Caco-2 (cell line): ENCODE measurements at regions of chr14 and their contacts with region 1.

Region 1: GRCh38 chr14:94136575-94137331 is 7.3 kb upstream of the IFI27L2 start:
- DNase-seq: peak; percentile 71 to 79
- H3K4me3 ChIP-seq: no peak overlapping the region
- H3K4me3 Mint-ChIP-seq: no peak overlapping the region
- H3K27ac Mint-ChIP-seq: no peak overlapping the region
- H3K4me1 ChIP-seq: no peaks in the 10 kb centered on the region
- H3K4me1 Mint-ChIP-seq: no peaks in the 10 kb centered on the region
- H3K27me3 ChIP-seq: no peaks in the 10 kb centered on the region
- H3K27me3 Mint-ChIP-seq: peaks cover 6% of the 10 kb centered on the region
- CTCF ChIP-seq: peak; percentile 82 to 90

Region 2: GRCh38 chr14:94036313-94037050 is 100.3 kb before region 1 on chr14:
- CTCF ChIA-PET with region 1: interaction called, 31 read pairs
- POLR2A ChIA-PET with region 1: no interaction called
- intact Hi-C with region 1: loop called (anchors 2 kb)
- DNase-seq: peak; percentile 70 to 79
- H3K4me3 ChIP-seq: no peak overlapping the region
- H3K4me3 Mint-ChIP-seq: no peak overlapping the region
- H3K27ac Mint-ChIP-seq: no peak overlapping the region
- H3K4me1 ChIP-seq: no peaks in the 10 kb centered on the region
- H3K4me1 Mint-ChIP-seq: peaks cover 4% of the 10 kb centered on the region
- H3K27me3 ChIP-seq: no peaks in the 10 kb centered on the region
- H3K27me3 Mint-ChIP-seq: no peaks in the 10 kb centered on the region
- CTCF ChIP-seq: peak; percentile 72 to 79

Region 3: GRCh38 chr14:94051115-94051514 is 85.6 kb before region 1 on chr14:
- CTCF ChIA-PET with region 1: interaction called, 28 read pairs
- POLR2A ChIA-PET with region 1: no interaction called
- intact Hi-C with region 1: loop called (anchors 1 kb)
- DNase-seq: peak in 1 of 2 experiments; percentile 25
- H3K4me3 ChIP-seq: no peak overlapping the region
- H3K4me3 Mint-ChIP-seq: no peak overlapping the region
- H3K27ac Mint-ChIP-seq: no peak overlapping the region
- H3K4me1 ChIP-seq: no peaks in the 10 kb centered on the region
- H3K4me1 Mint-ChIP-seq: no peaks in the 10 kb centered on the region
- H3K27me3 ChIP-seq: no peaks in the 10 kb centered on the region
- H3K27me3 Mint-ChIP-seq: no peaks in the 10 kb centered on the region
- CTCF ChIP-seq: peak; percentile 28 to 57

Region 4: GRCh38 chr14:94180655-94181271 is 44.0 kb after region 1 on chr14:
- CTCF ChIA-PET with region 1: interaction called, 4 read pairs
- POLR2A ChIA-PET with region 1: no interaction called
- intact Hi-C with region 1: loop called (anchors 1 kb)
- DNase-seq: peak in 1 of 2 experiments; percentile 30
- H3K4me3 ChIP-seq: no peak overlapping the region
- H3K4me3 Mint-ChIP-seq: no peak overlapping the region
- H3K27ac Mint-ChIP-seq: no peak overlapping the region
- H3K4me1 ChIP-seq: no peaks in the 10 kb centered on the region
- H3K4me1 Mint-ChIP-seq: no peaks in the 10 kb centered on the region
- H3K27me3 ChIP-seq: no peaks in the 10 kb centered on the region
- H3K27me3 Mint-ChIP-seq: peaks cover 25% of the 10 kb centered on the region
- CTCF ChIP-seq: peak; percentile 22 to 59

Region 5: DNA sequence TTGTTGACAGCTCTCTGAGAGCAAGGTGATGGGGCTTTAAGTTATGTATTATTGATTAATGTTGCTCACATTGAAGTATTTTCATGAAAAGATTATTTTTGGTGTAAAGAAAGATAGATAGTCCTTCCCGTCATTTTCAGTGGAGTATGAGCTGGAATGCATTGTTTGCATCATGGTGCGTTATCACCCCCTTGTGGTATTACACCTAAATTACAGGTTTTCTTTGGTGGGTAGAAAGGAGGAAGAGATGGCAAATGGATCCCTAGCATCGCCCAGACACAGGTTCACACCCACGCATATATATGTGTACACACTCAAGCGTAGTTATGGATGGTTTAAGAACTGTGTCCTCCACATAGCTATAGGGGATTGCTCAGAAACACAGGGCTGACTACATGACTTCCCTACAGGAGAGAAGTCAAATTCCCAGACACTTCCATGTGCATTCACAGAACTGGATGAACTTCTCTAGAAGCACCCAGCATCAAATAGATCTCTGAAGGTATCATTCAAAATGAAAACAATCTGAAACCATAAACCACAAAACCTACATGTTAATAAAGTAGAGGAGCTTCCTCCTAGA is 170.7 kb after region 1 on chr14:
- CTCF ChIA-PET with region 1: interaction called, 3 read pairs
- POLR2A ChIA-PET with region 1: no interaction called
- intact Hi-C with region 1: loop called (anchors 2 kb)
- DNase-seq: peak in 1 of 2 experiments; percentile 53
- H3K4me3 ChIP-seq: no peak overlapping the region
- H3K4me3 Mint-ChIP-seq: no peak overlapping the region
- H3K27ac Mint-ChIP-seq: no peak overlapping the region
- H3K4me1 ChIP-seq: no peaks in the 10 kb centered on the region; the same call in 1 of the 2 replicates
- H3K4me1 Mint-ChIP-seq: no peaks in the 10 kb centered on the region
- H3K27me3 ChIP-seq: no peaks in the 10 kb centered on the region
- H3K27me3 Mint-ChIP-seq: no peaks in the 10 kb centered on the region
- CTCF ChIP-seq: peak in 1 of 2 experiments; percentile 45

Region 6: DNA sequence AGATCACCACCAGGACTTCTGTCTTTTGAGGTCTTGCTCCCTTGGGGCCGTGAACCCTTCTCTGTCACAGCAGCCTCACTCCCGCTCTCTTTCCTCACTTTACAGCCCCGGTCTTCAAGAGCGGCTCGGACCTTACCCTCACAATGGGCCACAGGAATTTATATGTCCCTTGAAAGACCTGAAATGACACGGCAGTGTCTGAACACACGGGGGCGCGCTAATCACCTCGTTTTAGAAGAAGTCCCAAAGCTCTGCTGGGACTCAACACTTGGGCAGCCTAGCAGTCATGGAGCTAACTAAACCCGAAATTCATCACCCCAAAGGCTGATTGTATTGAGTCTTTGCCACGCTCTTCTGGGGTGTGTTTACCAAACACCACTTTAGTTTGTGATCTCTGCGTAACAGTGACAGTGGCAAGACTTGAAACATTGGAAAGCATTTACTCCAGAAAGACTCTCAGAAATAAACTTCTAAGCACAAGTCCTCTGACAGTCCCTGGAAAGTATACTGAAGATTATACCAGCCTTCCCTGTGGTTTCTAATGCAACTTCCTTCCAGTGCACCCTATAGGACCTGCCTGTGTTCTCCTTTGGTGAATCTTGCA is 286.8 kb after region 1 on chr14:
- CTCF ChIA-PET with region 1: no interaction called
- POLR2A ChIA-PET with region 1: no interaction called
- intact Hi-C with region 1: loop called (anchors 10 kb)
- DNase-seq: peak; percentile 80 to 86
- H3K4me3 ChIP-seq: no peak overlapping the region
- H3K4me3 Mint-ChIP-seq: peak overlapping the region; percentile 13
- H3K27ac Mint-ChIP-seq: no peak overlapping the region
- H3K4me1 ChIP-seq: no peaks in the 10 kb centered on the region
- H3K4me1 Mint-ChIP-seq: peaks cover 7% of the 10 kb centered on the region
- H3K27me3 ChIP-seq: no peaks in the 10 kb centered on the region
- H3K27me3 Mint-ChIP-seq: no peaks in the 10 kb centered on the region
- CTCF ChIP-seq: peak; percentile 65 to 79

Region 7: GRCh38 chr14:94485944-94486841 is 349.4 kb after region 1 on chr14:
- CTCF ChIA-PET with region 1: interaction called, 11 read pairs
- POLR2A ChIA-PET with region 1: no interaction called
- intact Hi-C with region 1: loop called (anchors 10 kb)
- DNase-seq: peak; percentile 54 to 75
- H3K4me3 ChIP-seq: peak overlapping the region; percentile 24; the same call in 1 of the 2 replicates
- H3K4me3 Mint-ChIP-seq: no peak overlapping the region
- H3K27ac Mint-ChIP-seq: no peak overlapping the region
- H3K4me1 ChIP-seq: no peaks in the 10 kb centered on the region
- H3K4me1 Mint-ChIP-seq: no peaks in the 10 kb centered on the region
- H3K27me3 ChIP-seq: no peaks in the 10 kb centered on the region
- H3K27me3 Mint-ChIP-seq: peaks cover 4% of the 10 kb centered on the region
- CTCF ChIP-seq: peak; percentile 95 to 98